Activated CD4-positive, alpha-beta memory T cell treated with anti-CD3 and anti-CD28 coated beads, Interleukin-2, amount 10 ng/mL, durations not matched to agents 7 days and 5 days (primary cell): ENCODE measurements at regions of chrX and their contacts with region 1.

Region 1: GRCh38 chrX:23742697-23743622 is at the start of gene ACOT9:
- DNase-seq: peak; percentile 80
- H3K4me3 Mint-ChIP-seq: peak within 1 kb of the TSS; percentile 84
- H3K27ac Mint-ChIP-seq: peak within 1 kb of the TSS; percentile 79
- H3K4me1 Mint-ChIP-seq: peaks cover 41% of the 10 kb centered on the region
- H3K27me3 Mint-ChIP-seq: no peaks in the 10 kb centered on the region
- total RNA-seq, gene ACOT9: 37.3 to 39.5 TPM

Region 2: GRCh38 chrX:23732704-23733103 is 10.3 kb before region 1 on chrX:
- CTCF ChIA-PET with region 1: interaction called, 3 read pairs
- POLR2A ChIA-PET with region 1: interaction called, 11 read pairs
- DNase-seq: no peak
- H3K4me3 Mint-ChIP-seq: peak overlapping the region; percentile 33
- H3K27ac Mint-ChIP-seq: peak overlapping the region; percentile 86
- H3K4me1 Mint-ChIP-seq: peaks cover 24% of the 10 kb centered on the region
- H3K27me3 Mint-ChIP-seq: no peaks in the 10 kb centered on the region

Region 3: DNA sequence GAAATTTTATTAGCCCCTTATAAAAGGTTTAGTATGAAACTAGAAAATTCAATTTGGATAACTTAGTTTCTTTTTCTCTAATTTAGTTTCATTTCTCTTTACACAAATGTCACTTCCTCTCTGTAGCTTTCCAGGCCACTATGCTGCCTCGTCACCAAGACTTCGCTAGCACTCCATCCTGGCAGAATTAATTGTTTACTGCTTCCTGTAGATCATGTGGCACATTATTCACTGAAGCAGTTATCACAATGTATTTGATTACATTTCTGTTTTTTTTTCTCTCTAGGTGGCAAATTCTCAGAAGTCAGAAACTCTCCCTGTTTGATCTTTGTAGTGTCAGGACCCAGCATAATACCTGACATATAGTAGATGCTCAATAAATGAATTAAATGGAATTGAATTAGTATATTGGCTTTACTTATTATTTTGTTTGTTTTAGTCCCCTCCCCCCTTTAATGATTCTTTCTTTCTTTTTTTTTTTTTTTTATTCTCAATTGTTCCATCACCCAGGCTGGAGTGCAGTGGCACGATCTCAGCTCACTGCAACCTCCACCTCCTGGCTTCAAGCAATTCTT is 30.7 kb after region 1 on chrX:
- CTCF ChIA-PET with region 1: no interaction called
- POLR2A ChIA-PET with region 1: interaction called, 12 read pairs
- DNase-seq: peak; percentile 63
- H3K4me3 Mint-ChIP-seq: peak overlapping the region; percentile 49
- H3K27ac Mint-ChIP-seq: peak overlapping the region; percentile 97
- H3K4me1 Mint-ChIP-seq: peaks cover 18% of the 10 kb centered on the region
- H3K27me3 Mint-ChIP-seq: no peaks in the 10 kb centered on the region

Region 4: DNA sequence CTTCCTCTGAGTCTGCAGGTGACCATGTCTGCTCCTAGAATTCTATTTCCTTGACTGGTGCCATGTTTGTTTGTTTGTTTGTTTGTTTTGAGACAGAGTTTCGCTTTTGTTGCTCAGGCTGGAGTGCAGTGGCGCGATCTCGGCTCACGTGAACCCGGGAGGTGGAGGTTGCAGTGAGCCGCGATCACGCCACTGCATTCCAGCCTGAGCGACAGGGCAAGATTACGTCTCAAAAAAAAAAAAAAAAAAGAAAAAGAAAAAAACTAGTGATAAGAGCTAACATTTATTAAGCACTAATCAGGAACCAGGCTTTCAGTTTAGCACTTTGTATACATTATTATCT is 47.2 kb after region 1 on chrX:
- CTCF ChIA-PET with region 1: no interaction called
- POLR2A ChIA-PET with region 1: no interaction called
- DNase-seq: no peak
- H3K4me3 Mint-ChIP-seq: no peak overlapping the region
- H3K27ac Mint-ChIP-seq: no peak overlapping the region
- H3K4me1 Mint-ChIP-seq: peaks cover 12% of the 10 kb centered on the region
- H3K27me3 Mint-ChIP-seq: no peaks in the 10 kb centered on the region